Activated T-helper 2 cell treated with anti-CD3 and anti-CD28 coated beads, Interferon-gamma antibody, Interleukin-2, Interleukin-4, amounts not matched to agents 10 μg/mL and 5 μg/mL and 100 μg/mL, durations not matched to agents 14 hours and 24 hours and 36 hours (primary cell): ENCODE measurements at regions of chr15 and their contacts with region 1.

Region 1: DNA sequence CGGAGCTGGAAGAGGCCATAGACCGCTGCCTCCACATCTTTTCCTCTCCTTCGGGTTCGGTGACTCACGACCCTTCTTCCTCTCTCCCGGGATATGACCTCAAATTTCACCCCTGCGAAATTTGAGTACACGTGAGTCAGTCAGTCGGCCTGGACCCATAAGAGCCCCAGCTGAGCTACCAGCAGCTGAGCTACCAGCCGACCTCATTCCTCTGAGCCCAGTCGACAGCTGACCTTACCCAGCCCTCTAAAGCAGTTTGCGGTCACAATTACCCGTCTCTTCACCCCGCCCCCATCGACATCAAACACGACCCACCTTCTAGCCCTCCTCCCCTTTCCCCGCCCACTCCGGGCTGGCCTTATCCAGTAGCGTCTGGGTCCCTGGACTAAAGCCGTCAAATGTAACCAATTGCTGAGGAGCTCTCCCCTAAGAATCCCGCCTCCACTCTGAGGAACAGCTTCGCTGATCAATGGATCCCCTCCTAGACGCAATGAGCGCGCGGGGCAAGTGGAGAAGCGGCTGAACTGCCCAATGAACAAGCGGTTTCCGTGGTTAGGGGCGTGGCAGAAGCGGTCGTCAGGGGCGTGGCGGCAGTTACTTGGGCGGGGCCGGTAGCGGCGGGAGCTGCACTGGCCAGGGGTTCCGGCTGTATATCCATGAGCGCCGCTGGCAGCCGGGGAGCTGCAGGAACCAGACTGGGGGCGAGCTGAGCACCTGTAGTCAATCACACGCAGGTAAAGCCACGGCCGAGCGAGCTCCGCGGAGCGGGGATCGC is at the start of gene ABHD2:
- DNase-seq: peak; percentile 99
- H3K4me3 Mint-ChIP-seq: no peak within 1 kb of the TSS
- H3K27ac Mint-ChIP-seq: peak within 1 kb of the TSS; percentile 67
- H3K4me1 Mint-ChIP-seq: peaks cover 34% of the 10 kb centered on the region
- H3K27me3 Mint-ChIP-seq: no peaks in the 10 kb centered on the region
- total RNA-seq, gene ABHD2: 57.2 and 59.3 TPM in 2 replicates

Region 2: GRCh38 chr15:89068325-89068784 is 19.7 kb before region 1 on chr15:
- intact Hi-C with region 1: loop called (anchors 1 kb)
- DNase-seq: no peak
- H3K4me3 Mint-ChIP-seq: no peak overlapping the region
- H3K27ac Mint-ChIP-seq: peak overlapping the region; percentile 70
- H3K4me1 Mint-ChIP-seq: peaks cover 11% of the 10 kb centered on the region
- H3K27me3 Mint-ChIP-seq: no peaks in the 10 kb centered on the region

Region 3: GRCh38 chr15:89129123-89129815 is 41.3 kb after region 1 on chr15:
- intact Hi-C with region 1: loop called (anchors 2 kb)
- DNase-seq: peak; percentile 26
- H3K4me3 Mint-ChIP-seq: no peak overlapping the region
- H3K27ac Mint-ChIP-seq: no peak overlapping the region
- H3K4me1 Mint-ChIP-seq: peaks cover 17% of the 10 kb centered on the region
- H3K27me3 Mint-ChIP-seq: no peaks in the 10 kb centered on the region